BJ (cell line): ENCODE measurements at regions of chr12 and their contacts with region 1.

Region 1: DNA sequence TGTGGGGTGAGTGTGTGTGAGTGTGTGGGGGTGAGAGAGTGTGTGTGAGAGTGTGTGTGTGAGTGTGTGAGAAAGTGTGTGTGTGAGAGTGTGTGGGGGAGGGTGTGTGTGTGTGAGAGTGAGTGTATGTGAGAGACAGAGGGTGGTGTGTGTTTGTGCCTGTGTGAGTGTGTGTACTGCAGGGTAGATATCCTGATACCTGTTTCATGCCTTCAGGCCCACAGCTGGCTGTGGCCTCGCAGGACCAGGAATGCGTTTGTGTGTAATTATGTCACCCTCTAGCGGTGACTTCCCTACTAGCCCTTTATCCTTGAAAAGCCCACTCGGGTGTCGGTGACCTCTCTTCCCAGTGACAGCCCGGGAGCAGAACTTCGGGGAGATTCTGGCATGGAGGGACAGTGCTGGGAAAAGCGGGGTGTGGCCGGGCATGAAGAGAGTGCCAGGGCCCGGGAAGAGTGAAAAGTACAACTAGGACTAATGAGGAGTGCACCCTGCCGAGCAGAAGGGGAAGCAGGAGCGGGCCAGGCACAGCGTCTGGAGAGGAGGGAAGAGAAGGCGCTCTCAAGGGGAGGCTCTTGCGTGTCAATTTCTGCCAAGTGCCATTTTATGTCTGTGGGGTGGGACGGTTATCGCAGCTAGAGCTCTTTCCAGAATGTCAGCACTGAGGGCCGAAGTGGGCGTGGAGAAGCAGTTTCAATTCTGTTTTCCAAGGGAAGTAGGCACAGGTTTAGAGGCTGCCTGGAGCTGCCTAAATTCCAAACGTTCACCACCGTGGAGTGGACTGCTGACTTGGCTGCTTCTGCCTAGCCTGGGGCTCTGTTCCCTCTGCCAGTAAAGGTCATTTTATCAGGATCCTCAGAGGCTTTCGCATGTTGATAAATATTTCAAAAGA is 11.0 kb upstream of the FBXL14 start:
- DNase-seq: no peak
- H3K4me3 ChIP-seq: peak overlapping the region; percentile 36
- H3K27me3 ChIP-seq: no peaks in the 10 kb centered on the region
- CTCF ChIP-seq: peak; percentile 77

Region 2: DNA sequence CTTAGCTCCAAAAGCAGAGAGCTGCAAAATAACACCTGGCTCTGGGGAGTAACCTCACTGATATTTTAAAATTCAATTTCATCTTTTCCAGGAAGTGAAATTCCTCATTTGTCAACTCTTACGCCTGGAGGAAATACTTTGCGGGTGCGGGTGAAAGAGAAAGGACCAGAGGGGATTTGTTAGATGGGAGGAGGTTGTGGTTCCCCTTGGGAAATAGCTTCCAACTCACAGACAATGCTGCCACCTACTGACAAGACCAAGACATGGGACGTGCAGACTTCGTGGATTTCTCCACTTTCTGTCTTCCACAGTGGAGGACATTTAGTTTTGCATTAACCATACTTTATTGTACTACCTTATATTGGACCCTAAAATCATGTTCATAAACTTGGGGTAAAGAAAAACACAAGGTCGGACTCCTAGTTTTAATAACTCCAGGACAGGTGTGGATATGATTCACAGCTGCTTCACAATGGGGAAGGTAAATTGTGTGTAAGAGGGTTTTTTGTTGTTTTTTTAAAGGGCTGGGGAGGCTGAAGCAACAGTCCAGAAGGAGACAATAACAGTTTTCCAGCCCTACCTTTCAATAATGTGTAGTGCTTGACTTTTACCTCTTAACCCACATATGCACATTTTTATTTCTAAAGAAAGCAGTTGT is 21.8 kb before region 1 on chr12:
- CTCF ChIA-PET with region 1: interaction called, 13 read pairs
- POLR2A ChIA-PET with region 1: interaction called, 5 read pairs
- DNase-seq: no peak
- H3K4me3 ChIP-seq: no peak overlapping the region
- H3K27me3 ChIP-seq: no peaks in the 10 kb centered on the region
- CTCF ChIP-seq: peak; percentile 79

Region 3: GRCh38 chr12:1593174-1594005 is 12.0 kb before region 1 on chr12:
- CTCF ChIA-PET with region 1: interaction called, 11 read pairs
- POLR2A ChIA-PET with region 1: no interaction called
- DNase-seq: no peak
- H3K4me3 ChIP-seq: peak overlapping the region; percentile 61
- H3K27me3 ChIP-seq: no peaks in the 10 kb centered on the region
- CTCF ChIP-seq: no peak

Region 4: GRCh38 chr12:1634590-1635191 is 29.3 kb after region 1 on chr12:
- CTCF ChIA-PET with region 1: interaction called, 11 read pairs
- POLR2A ChIA-PET with region 1: interaction called, 3 read pairs
- DNase-seq: no peak
- H3K4me3 ChIP-seq: no peak overlapping the region
- H3K27me3 ChIP-seq: no peaks in the 10 kb centered on the region
- CTCF ChIP-seq: peak; percentile 95